B cell (primary cell): ENCODE measurements at regions of chr12 and their contacts with region 1.

Region 1: GRCh38 chr12:47742253-47742825 is 16.3 kb downstream of the RAPGEF3 start:
- DNase-seq: peak; percentile 78
- ATAC-seq: peak; percentile 18
- H3K4me3 ChIP-seq: no peak overlapping the region
- H3K4me3 Mint-ChIP-seq: no peak overlapping the region
- H3K27ac ChIP-seq: no peak overlapping the region
- H3K27ac Mint-ChIP-seq: peak overlapping the region; percentile 75
- H3K4me1 ChIP-seq: peaks cover 43 to 61% of the 10 kb centered on the region in 2 donors
- H3K4me1 Mint-ChIP-seq: peaks cover 65% of the 10 kb centered on the region
- H3K27me3 ChIP-seq: no peaks in the 10 kb centered on the region
- H3K27me3 Mint-ChIP-seq: no peaks in the 10 kb centered on the region
- CTCF ChIP-seq: peak; percentile 98

Region 2: DNA sequence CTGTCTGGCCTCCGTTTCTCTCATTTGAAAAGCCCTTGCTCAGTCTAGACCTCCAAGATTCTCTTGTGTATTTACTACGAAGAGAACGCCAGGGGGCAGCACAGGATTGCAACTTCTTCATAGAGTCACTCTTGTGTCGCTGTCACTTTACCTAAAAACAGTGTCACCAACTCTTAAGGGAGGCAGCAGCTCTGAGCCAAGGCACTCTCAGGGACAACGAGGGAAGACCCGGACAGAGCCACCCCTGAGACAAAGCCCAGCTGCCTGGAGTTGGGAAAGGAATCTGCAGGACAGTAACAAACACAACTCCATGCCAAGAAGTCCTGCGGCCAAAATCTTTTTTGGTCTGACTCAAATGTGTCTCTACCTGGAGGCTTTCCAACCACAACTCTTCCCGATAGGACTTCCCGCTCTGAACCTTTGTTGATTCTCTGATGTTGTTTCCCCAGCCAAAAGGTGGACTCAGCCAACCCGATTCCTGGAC is 26.9 kb before region 1 on chr12:
- CTCF ChIA-PET with region 1: interaction called, 270 read pairs
- POLR2A ChIA-PET with region 1: interaction called, 3 read pairs
- intact Hi-C with region 1: loop called (anchors 2 kb)
- DNase-seq: peak; percentile 87
- ATAC-seq: peak; percentile 86
- H3K4me3 ChIP-seq: no peak overlapping the region
- H3K4me3 Mint-ChIP-seq: no peak overlapping the region
- H3K27ac ChIP-seq: no peak overlapping the region
- H3K27ac Mint-ChIP-seq: peak overlapping the region; percentile 33
- H3K4me1 ChIP-seq: peaks cover 15 to 28% of the 10 kb centered on the region in 2 donors
- H3K4me1 Mint-ChIP-seq: peaks cover 37% of the 10 kb centered on the region
- H3K27me3 ChIP-seq: no peaks in the 10 kb centered on the region
- H3K27me3 Mint-ChIP-seq: no peaks in the 10 kb centered on the region
- CTCF ChIP-seq: peak; percentile 86

Region 3: GRCh38 chr12:47767216-47767724 is 24.9 kb after region 1 on chr12:
- CTCF ChIA-PET with region 1: interaction called, 515 read pairs
- POLR2A ChIA-PET with region 1: interaction called, 10 read pairs
- intact Hi-C with region 1: loop called (anchors 1 kb)
- DNase-seq: peak; percentile 78
- ATAC-seq: peak; percentile 74
- H3K4me3 ChIP-seq: no peak overlapping the region
- H3K4me3 Mint-ChIP-seq: no peak overlapping the region
- H3K27ac ChIP-seq: no peak overlapping the region
- H3K27ac Mint-ChIP-seq: no peak overlapping the region
- H3K4me1 ChIP-seq: peaks cover 5 to 15% of the 10 kb centered on the region in 2 donors
- H3K4me1 Mint-ChIP-seq: peaks cover 9% of the 10 kb centered on the region
- H3K27me3 ChIP-seq: no peaks in the 10 kb centered on the region
- H3K27me3 Mint-ChIP-seq: peaks cover 4% of the 10 kb centered on the region
- CTCF ChIP-seq: peak; percentile 80

Region 4: DNA sequence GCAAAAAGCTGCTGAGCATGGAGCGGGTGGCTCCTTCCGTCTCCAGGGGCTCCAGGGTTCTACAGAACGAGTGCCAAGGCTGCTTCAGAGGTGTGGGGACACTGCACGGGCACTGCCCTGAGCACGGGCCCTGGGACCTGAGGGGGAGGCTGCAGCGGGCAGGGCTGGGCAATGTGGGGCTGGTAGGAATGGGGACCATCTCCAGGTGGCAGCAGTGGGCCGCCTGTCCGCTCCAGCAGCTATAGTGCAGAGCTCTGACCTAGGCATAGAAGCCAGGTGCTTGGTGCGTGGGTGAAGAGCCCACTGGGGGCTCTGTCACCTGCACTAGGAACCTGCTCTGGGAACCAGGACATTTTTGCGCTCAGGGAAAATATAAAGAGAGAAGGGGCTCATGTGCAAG is 55.1 kb after region 1 on chr12:
- CTCF ChIA-PET with region 1: interaction called, 12 read pairs
- POLR2A ChIA-PET with region 1: no interaction called
- intact Hi-C with region 1: no loop called
- DNase-seq: peak; percentile 68
- ATAC-seq: peak; percentile 87
- H3K4me3 ChIP-seq: no peak overlapping the region
- H3K4me3 Mint-ChIP-seq: no peak overlapping the region
- H3K27ac ChIP-seq: no peak overlapping the region
- H3K27ac Mint-ChIP-seq: peak overlapping the region; percentile 84
- H3K4me1 ChIP-seq: peaks cover 12 to 26% of the 10 kb centered on the region in 2 donors
- H3K4me1 Mint-ChIP-seq: peaks cover 22% of the 10 kb centered on the region
- H3K27me3 ChIP-seq: no peaks in the 10 kb centered on the region
- H3K27me3 Mint-ChIP-seq: no peaks in the 10 kb centered on the region
- CTCF ChIP-seq: peak; percentile 38

Region 5: GRCh38 chr12:47828608-47829536 is 86.5 kb after region 1 on chr12:
- CTCF ChIA-PET with region 1: interaction called, 351 read pairs
- POLR2A ChIA-PET with region 1: interaction called, 3 read pairs
- intact Hi-C with region 1: no loop called
- DNase-seq: no peak
- ATAC-seq: no peak
- H3K4me3 ChIP-seq: no peak overlapping the region
- H3K4me3 Mint-ChIP-seq: no peak overlapping the region
- H3K27ac ChIP-seq: no peak overlapping the region
- H3K27ac Mint-ChIP-seq: no peak overlapping the region
- H3K4me1 ChIP-seq: peaks cover 28 to 35% of the 10 kb centered on the region in 2 donors
- H3K4me1 Mint-ChIP-seq: peaks cover 52% of the 10 kb centered on the region
- H3K27me3 ChIP-seq: no peaks in the 10 kb centered on the region
- H3K27me3 Mint-ChIP-seq: no peaks in the 10 kb centered on the region
- CTCF ChIP-seq: no peak